ENCODE measurements at regions of chr15 and their contacts with region 1.

Region 1: GRCh38 chr15:90869601-90870353 is 1.4 kb downstream of the FURIN start:
- DNase-seq: peak in 1 of 9 donors; percentile 67
- ATAC-seq: peak; percentile 73
- H3K4me3 ChIP-seq: peak overlapping the region; percentile 53
- H3K4me3 Mint-ChIP-seq: peak overlapping the region; percentile 82 to 93 (median 90)
- H3K27ac ChIP-seq: peak overlapping the region; percentile 73
- H3K27ac Mint-ChIP-seq: peak overlapping the region; percentile 82 to 97 (median 92)
- H3K4me1 ChIP-seq: peaks cover 27% of the 10 kb centered on the region in 2 donors
- H3K4me1 Mint-ChIP-seq: peaks cover 22 to 66% (median 45%) of the 10 kb centered on the region in 7 donors
- H3K27me3 ChIP-seq: no peaks in the 10 kb centered on the region
- H3K27me3 Mint-ChIP-seq: no peaks in the 10 kb centered on the region

Region 2: DNA sequence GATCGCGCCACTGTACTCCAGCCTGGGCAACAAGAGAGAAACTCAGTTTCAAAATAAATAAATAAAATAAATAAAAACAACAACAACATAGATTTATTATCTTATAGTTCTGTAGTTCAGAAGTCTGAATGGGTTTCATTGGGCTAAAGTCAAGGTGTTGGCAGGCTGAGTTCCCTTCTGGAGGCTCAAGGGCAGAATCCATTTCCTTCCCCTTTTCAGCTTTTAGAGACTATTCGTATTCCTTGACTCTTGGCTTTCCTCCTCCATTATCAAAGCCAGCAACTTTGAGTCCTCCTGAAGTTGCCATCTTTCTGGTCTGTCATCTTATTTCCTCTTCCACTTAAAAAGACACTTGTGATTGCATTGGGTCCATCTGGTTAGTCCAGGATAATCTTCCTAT is 140.5 kb before region 1 on chr15:
- CTCF ChIA-PET with region 1: no interaction called
- POLR2A ChIA-PET with region 1: no interaction called
- intact Hi-C with region 1: no loop called
- DNase-seq: no peak
- ATAC-seq: no peak
- H3K4me3 ChIP-seq: no peak overlapping the region
- H3K4me3 Mint-ChIP-seq: no peak overlapping the region
- H3K27ac ChIP-seq: no peak overlapping the region
- H3K27ac Mint-ChIP-seq: no peak overlapping the region
- H3K4me1 ChIP-seq: no peaks in the 10 kb centered on the region
- H3K4me1 Mint-ChIP-seq: peaks cover 0 to 38% (median 0%) of the 10 kb centered on the region in 7 donors
- H3K27me3 ChIP-seq: no peaks in the 10 kb centered on the region
- H3K27me3 Mint-ChIP-seq: no peaks in the 10 kb centered on the region

Region 3: DNA sequence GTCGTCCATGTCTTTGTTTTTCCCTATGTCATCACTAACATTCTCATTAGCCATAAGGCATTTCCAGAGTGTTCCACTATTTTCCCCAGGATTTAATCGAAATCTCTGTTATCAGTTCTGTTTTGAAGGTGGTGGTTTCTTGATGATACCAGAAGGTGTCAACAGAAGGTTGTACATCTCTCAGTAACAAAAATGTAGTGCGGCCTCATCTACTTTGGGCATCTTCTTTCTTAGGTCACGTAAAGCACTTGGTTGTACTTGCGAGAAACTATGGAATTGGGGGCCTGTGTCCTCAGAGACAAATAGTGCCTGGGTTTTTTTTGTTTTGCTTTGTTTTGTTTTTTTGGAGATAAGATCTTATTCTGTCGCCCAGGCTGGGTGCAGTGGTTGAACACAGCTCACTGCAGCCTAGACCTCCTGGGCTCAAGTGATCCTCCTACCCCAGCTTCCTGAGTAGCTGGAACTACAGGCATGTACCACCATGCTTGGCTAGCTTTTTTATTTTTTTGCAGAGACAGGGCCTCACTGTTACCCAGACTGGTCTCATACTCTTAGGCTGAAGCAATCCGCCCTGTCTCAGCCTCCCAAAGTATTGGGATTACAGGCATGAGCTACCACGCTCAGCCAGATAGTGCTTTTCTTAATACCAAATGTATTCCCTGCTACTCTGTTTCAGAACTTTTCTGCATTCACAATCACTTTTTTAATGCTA is 62.5 kb before region 1 on chr15:
- CTCF ChIA-PET with region 1: interaction called, 4 read pairs
- POLR2A ChIA-PET with region 1: no interaction called
- intact Hi-C with region 1: loop called in 1 of 2 experiments (anchors 2 kb)
- DNase-seq: no peak
- ATAC-seq: no peak
- H3K4me3 ChIP-seq: no peak overlapping the region
- H3K4me3 Mint-ChIP-seq: peak overlapping the region in 1 of 10 donors; percentile 52
- H3K27ac ChIP-seq: no peak overlapping the region
- H3K27ac Mint-ChIP-seq: peak overlapping the region in 1 of 9 donors; percentile 95
- H3K4me1 ChIP-seq: no peaks in the 10 kb centered on the region
- H3K4me1 Mint-ChIP-seq: peaks cover 0 to 66% (median 0%) of the 10 kb centered on the region in 7 donors
- H3K27me3 ChIP-seq: no peaks in the 10 kb centered on the region
- H3K27me3 Mint-ChIP-seq: no peaks in the 10 kb centered on the region